Activated CD4-positive, alpha-beta T cell treated with anti-CD3 and anti-CD28 coated beads, Interleukin-2, amount 10 ng/mL, durations not matched to agents 24 days and 14 days (primary cell): ENCODE measurements at regions of chr2 and their contacts with region 1.

Region 1: DNA sequence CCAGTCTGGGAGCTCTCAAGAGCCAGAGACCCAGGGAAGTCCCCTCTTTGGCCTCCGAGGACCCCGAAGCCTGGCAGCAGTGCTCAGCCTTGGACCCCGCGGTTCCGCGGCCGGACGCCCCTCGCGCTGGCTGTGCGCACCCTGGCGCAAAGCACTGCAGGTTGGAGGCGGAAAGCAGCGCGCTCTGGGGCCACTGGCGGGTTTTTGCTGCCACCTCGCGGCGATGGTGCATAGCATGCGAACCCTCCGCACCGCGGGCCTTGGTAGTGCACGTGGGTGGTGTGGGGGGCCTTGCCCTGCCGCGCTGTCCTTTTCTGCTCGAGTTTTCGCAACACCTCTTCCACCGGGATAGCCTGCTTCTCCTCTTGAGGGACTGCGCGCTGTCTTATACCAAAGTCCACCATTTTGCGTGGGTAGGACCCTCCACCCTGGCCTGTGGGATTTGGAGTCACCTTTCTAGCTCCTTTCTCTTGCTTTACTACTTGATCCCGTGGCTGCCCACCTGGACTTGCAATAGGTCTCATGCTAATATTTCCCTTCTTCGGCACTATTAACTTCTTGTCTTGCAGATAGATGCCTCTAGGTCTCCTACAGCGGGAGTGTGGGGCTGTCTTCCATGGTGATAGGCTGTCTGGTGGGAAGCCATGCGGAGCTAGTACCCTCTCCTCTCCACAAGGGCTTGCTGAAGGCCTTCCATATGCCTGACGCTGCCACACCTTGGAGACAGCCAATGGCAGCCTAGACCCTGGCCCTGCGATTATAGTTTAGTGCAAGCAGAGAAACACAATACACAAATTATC is 14.3 kb downstream of the SIX3 start:
- DNase-seq: peak; percentile 92
- H3K4me3 Mint-ChIP-seq: peak overlapping the region; percentile 25
- H3K27ac Mint-ChIP-seq: no peak overlapping the region
- H3K4me1 Mint-ChIP-seq: peaks cover 11% of the 10 kb centered on the region
- H3K27me3 Mint-ChIP-seq: peaks cover 68% of the 10 kb centered on the region

Region 2: GRCh38 chr2:44044281-44044720 is 911.5 kb before region 1 on chr2:
- intact Hi-C with region 1: loop called (anchors 1 kb)
- DNase-seq: peak; percentile 94
- H3K4me3 Mint-ChIP-seq: no peak overlapping the region
- H3K27ac Mint-ChIP-seq: no peak overlapping the region
- H3K4me1 Mint-ChIP-seq: no peaks in the 10 kb centered on the region
- H3K27me3 Mint-ChIP-seq: peaks cover 9% of the 10 kb centered on the region

Region 3: GRCh38 chr2:44244129-44244871 is 711.5 kb before region 1 on chr2:
- intact Hi-C with region 1: loop called (anchors 5 kb)
- DNase-seq: peak; percentile 83
- H3K4me3 Mint-ChIP-seq: peak overlapping the region; percentile 65
- H3K27ac Mint-ChIP-seq: no peak overlapping the region
- H3K4me1 Mint-ChIP-seq: peaks cover 7% of the 10 kb centered on the region
- H3K27me3 Mint-ChIP-seq: peaks cover 5% of the 10 kb centered on the region

Region 4: GRCh38 chr2:44479122-44479887 is 476.5 kb before region 1 on chr2:
- intact Hi-C with region 1: loop called (anchors 1 kb)
- DNase-seq: peak; percentile 86
- H3K4me3 Mint-ChIP-seq: no peak overlapping the region
- H3K27ac Mint-ChIP-seq: no peak overlapping the region
- H3K4me1 Mint-ChIP-seq: peaks cover 3% of the 10 kb centered on the region
- H3K27me3 Mint-ChIP-seq: no peaks in the 10 kb centered on the region

Region 5: DNA sequence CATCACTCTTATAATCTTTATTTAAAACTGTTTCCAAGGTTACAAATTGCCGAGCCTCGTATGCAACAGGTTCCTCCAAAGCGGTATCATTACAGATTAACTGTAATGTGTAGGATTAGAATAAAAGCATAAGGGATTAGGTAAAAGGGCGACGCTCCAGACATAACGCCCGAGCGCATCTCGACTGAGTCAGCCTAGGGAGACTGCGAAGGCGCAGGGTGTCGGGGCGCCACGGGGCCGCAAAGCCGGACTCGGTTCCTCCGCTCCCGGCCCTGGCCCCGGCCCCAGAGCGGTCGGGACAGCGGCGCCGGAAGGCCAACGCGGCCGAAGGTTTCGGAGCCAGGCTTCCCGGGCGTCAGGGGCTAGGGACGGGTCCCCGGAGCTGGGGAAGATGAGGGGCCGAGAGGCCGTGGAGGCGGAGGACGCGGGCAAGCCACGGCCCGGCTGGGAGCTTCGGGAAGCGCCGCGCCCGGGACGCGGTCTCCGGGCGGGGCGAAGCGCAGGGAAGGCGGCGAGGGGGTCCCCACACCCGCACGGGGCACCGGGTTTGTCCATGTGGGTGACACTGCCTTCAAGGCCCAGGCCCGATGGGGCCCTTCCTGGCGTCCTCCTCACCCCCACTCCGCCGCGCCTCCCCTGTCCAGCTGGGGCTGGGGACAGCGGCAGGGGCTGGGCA is 27.2 kb before region 1 on chr2:
- intact Hi-C with region 1: loop called (anchors 1 kb)
- DNase-seq: no peak
- H3K4me3 Mint-ChIP-seq: no peak overlapping the region
- H3K27ac Mint-ChIP-seq: no peak overlapping the region
- H3K4me1 Mint-ChIP-seq: peaks cover 5% of the 10 kb centered on the region
- H3K27me3 Mint-ChIP-seq: peaks cover 76% of the 10 kb centered on the region

Region 6: DNA sequence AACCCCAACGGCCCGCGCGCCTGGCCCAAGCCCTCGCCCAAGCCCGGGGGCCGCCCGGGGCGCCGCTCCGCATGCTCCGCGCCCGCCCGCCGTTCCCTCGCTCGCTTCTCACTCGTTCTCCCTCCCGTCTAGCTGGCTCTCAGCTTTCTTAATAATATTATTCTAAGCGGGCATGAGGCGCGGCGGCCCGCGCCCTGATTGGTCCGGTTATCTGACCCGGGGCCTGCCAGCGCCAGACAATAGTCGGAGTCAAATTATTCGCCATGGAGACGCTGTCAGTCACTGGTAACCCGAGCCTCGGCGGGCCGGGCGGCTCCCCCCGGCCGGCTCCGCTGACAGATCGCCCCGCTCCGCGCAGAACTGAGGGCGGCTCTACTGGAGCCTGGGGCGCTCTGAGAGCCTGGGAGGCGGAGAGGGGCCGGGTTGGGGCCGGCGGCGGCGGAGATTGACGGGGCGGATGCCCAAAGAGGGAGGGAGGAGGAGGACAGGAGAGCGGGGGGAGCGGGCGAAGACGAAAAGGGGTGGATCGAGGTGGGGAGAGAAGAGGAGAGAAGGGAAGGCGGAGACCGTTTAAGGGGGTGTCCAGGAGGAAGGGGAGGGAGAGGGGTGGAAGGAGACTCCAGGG is 53.6 kb after region 1 on chr2 and contains the start of gene SIX2:
- intact Hi-C with region 1: loop called (anchors 5 kb)
- DNase-seq: peak; percentile 64
- H3K4me3 Mint-ChIP-seq: peak within 1 kb of the TSS; percentile 80
- H3K27ac Mint-ChIP-seq: no peak within 1 kb of the TSS
- H3K4me1 Mint-ChIP-seq: peaks cover 11% of the 10 kb centered on the region
- H3K27me3 Mint-ChIP-seq: peaks cover 77% of the 10 kb centered on the region
- total RNA-seq, gene SIX2: not detected in 2 replicates